ENCODE measurements at regions of chr7 and their contacts with region 1.

Region 1: GRCh38 chr7:128791121-128791961 is 427 bp upstream of the CCDC136 start:
- DNase-seq: peak; percentile 60
- H3K4me3 ChIP-seq: peak overlapping the region; percentile 75 to 89
- H3K27ac ChIP-seq: peak overlapping the region; percentile 76 to 77
- H3K4me1 ChIP-seq: no peaks in the 10 kb centered on the region
- H3K27me3 ChIP-seq: no peaks in the 10 kb centered on the region
- CTCF ChIP-seq: no peak
- POLR2A ChIP-seq: peak; percentile 33

Region 2: DNA sequence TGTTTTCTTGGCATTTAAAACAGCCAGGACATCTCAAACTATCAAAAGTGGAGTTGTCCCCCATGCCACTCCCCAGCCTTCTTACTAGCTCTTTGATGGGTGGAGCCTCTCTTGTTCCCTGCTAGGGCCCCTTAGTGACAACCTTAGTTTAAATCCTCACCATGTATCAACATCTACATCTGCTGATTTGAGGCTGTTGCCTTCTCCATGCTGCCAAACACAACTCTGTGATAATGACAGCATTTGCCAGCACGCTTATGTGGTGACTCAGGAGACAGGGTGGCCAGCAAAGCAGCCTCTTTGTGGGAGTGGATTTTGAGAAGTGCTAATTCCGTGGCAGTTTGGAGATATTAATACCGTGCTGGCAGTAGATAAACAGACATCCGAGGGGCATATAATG is 905.5 kb before region 1 on chr7:
- intact Hi-C with region 1: no loop called
- DNase-seq: no peak
- H3K4me3 ChIP-seq: no peak overlapping the region
- H3K27ac ChIP-seq: no peak overlapping the region
- H3K4me1 ChIP-seq: no peaks in the 10 kb centered on the region
- H3K27me3 ChIP-seq: no peaks in the 10 kb centered on the region
- CTCF ChIP-seq: no peak
- POLR2A ChIP-seq: no peak

Region 3: DNA sequence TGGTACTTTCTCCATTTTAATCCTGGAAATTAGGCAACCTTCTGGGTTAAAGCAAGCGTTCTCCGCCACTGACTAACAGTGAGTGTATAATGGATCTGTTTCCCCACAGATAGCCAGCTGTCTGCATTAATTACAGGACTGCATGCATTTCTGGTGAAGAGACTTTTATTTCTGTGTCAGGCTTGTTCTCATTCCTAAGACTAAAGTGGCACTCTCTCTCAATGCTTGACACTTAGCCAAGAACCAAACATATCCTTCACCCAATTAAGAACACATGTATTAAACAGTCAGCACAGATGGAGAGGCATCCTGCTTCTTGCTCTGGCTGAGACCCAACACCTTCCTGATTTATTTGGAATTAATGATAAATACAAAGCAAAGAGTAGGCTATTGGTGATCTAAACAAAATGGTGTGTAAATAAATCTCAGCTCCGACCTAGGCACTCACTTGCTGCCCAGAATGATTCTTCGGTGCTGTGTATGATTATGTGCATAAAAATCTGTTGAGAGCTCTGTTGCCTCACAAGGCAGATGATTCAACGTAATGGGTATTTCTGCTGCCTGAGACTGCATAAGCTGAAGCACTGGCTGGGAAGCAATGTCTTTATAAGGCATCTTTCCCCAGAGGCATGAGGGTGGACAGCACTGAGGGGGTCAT is 35.4 kb before region 1 on chr7:
- intact Hi-C with region 1: loop called (anchors 5 kb)
- DNase-seq: no peak
- H3K4me3 ChIP-seq: no peak overlapping the region
- H3K27ac ChIP-seq: peak overlapping the region; percentile 9 to 47
- H3K4me1 ChIP-seq: no peaks in the 10 kb centered on the region
- H3K27me3 ChIP-seq: no peaks in the 10 kb centered on the region
- CTCF ChIP-seq: no peak
- POLR2A ChIP-seq: no peak